ENCODE measurements at regions of chr20 and their contacts with region 1.

Region 1: GRCh38 chr20:822651-823573 is 10.6 kb upstream of the FAM110A start:
- DNase-seq: peak; percentile 68

Region 2: DNA sequence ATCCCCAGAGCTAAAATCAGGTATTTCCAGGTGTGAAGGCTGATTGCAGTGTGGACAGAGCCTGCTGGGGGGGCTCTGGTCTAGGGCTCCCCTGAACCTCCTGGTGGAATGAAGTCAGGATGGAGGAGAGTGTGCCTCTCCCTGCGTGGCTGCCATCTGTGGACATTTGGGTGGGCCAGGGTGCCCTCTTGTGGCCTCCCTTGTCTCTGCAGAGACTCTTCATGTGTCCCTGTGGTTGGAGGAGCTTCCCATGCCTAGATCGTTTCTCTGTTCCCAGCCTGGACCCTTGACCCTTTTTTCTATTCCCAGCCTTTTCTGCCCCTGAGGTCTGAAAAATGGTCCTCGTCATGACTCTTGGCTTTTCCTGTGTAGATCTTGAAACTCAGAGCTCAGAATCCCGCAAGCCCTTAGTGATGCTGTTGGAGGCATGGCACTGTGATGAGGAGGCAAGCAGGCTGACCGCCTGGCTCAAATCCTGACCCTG is 285.6 kb after region 1 on chr20:
- intact Hi-C with region 1: loop called in 1 of 2 experiments (anchors 5 kb)
- DNase-seq: peak; percentile 82